A549 (cell line): ENCODE measurements at regions of chr10 and their contacts with region 1.

Region 1: GRCh38 chr10:89954787-89955566 is 253.6 kb downstream of the KIF20B start:
- DNase-seq: no peak
- ATAC-seq: no peak
- H3K4me3 ChIP-seq: no peak overlapping the region
- H3K27ac ChIP-seq: no peak overlapping the region
- H3K4me1 ChIP-seq: no peaks in the 10 kb centered on the region
- CTCF ChIP-seq: peak; percentile 48; the same call in 2 of the 3 replicates
- EP300 ChIP-seq: no peak
- POLR2A ChIP-seq: no peak
- RAD21 ChIP-seq: peak; percentile 27 to 31; a peak in 3 of 5 replicates

Region 2: DNA sequence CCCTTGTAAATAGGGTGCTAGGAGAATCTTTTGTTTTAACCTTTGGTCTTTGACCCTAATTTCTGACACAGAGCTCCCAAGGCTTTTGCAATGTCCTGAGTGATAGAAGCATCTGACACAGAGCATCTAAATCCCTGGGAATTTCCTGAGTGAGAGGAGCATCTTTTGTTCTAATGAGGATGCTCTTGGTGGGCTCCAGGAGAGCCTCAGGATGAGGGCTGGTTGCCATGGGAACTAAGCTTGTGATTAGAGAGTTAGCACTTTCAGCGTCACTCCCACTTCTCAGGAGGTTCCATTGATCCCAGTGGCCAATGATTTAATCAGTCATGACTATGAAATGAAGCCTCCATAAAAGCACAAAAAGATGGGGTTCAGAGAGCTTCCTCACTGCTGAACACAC is 11.2 kb after region 1 on chr10:
- CTCF ChIA-PET with region 1: interaction called, 13 read pairs
- POLR2A ChIA-PET with region 1: no interaction called
- DNase-seq: no peak
- ATAC-seq: no peak
- H3K4me3 ChIP-seq: no peak overlapping the region
- H3K27ac ChIP-seq: no peak overlapping the region
- H3K4me1 ChIP-seq: no peaks in the 10 kb centered on the region
- CTCF ChIP-seq: no peak
- EP300 ChIP-seq: no peak
- POLR2A ChIP-seq: no peak
- RAD21 ChIP-seq: no peak

Region 3: GRCh38 chr10:90028312-90028711 is 73.3 kb after region 1 on chr10:
- CTCF ChIA-PET with region 1: no interaction called
- POLR2A ChIA-PET with region 1: no interaction called
- DNase-seq: no peak
- ATAC-seq: no peak
- H3K4me3 ChIP-seq: no peak overlapping the region
- H3K27ac ChIP-seq: no peak overlapping the region
- H3K4me1 ChIP-seq: no peaks in the 10 kb centered on the region
- CTCF ChIP-seq: no peak
- EP300 ChIP-seq: no peak
- POLR2A ChIP-seq: no peak
- RAD21 ChIP-seq: no peak